Activated naive CD4-positive, alpha-beta T cell treated with anti-CD3 and anti-CD28 coated beads, Interleukin-2, amount 10 ng/mL, durations not matched to agents 7 days and 5 days (primary cell): ENCODE measurements at regions of chr12 and their contacts with region 1.

Region 1: DNA sequence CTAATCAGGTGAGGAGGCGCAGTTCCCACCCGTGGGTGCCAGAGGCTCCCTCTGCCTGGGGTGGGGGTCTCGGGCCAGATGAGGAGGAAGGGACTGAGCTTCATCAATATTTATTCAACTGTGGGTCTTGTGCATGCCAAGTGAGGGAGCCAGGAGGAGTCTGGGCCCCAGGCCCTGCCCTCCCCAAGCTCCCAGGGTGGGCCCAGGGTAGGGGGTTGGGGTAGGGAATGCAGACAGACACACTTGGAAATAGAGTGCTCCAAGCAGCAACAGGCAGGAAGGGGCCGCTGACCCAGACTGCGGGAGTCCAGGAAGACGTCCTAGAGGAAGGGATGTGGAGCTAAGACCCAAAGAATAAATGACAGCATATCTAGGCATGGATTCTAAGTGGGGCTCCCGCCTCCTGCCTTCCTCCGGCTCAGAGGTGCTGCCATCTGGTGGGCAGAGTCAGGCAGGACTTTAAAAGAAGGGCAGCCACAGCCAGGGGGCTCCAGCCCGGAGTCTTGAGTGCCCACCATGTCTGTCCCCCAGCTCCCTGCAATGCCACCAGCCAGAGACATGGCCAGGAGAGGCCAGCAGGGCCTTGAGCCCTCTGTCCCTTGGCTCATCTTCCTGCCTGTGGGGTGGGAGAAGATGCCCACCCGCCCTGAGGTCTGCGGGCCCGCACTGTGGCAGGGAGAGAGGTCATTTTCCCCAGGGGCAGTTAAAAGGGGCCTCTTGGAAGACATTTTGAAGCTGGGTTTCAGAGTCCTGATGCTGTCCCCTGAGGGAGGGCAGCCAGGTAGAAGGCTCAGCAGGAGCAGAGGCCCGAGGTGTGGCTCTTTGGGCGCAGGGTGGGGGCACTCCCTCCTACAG is 70.1 kb downstream of the PHETA1 start:
- DNase-seq: peak; percentile 58
- H3K4me3 Mint-ChIP-seq: no peak overlapping the region
- H3K27ac Mint-ChIP-seq: no peak overlapping the region
- H3K4me1 Mint-ChIP-seq: no peaks in the 10 kb centered on the region
- H3K27me3 Mint-ChIP-seq: no peaks in the 10 kb centered on the region

Region 2: DNA sequence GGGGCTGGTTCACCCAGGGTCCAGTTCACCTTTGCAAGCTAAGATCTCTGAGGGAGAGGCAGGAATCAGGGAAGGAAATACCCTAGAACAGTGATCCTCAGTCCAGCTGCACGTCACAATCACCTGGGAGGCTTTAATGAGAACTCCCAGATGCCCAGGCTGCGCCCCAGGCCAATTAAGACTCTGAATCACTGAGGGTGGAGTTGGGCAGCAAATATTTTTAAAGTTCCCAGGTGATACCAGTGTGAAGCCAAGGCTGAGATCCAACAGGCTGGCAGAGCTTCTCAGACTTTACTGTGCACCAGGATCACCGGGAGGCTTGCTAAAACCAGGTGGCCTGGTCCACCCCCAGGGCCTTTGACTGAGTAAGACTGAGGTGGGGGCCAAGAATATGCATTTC is 402.2 kb before region 1 on chr12:
- CTCF ChIA-PET with region 1: interaction called, 11 read pairs
- DNase-seq: no peak
- H3K4me3 Mint-ChIP-seq: no peak overlapping the region
- H3K27ac Mint-ChIP-seq: no peak overlapping the region
- H3K4me1 Mint-ChIP-seq: peaks cover 3% of the 10 kb centered on the region
- H3K27me3 Mint-ChIP-seq: peaks cover 37% of the 10 kb centered on the region

Region 3: GRCh38 chr12:111024205-111024801 is 274.5 kb before region 1 on chr12:
- CTCF ChIA-PET with region 1: interaction called, 11 read pairs
- DNase-seq: peak; percentile 66
- H3K4me3 Mint-ChIP-seq: no peak overlapping the region
- H3K27ac Mint-ChIP-seq: no peak overlapping the region
- H3K4me1 Mint-ChIP-seq: no peaks in the 10 kb centered on the region
- H3K27me3 Mint-ChIP-seq: peaks cover 82% of the 10 kb centered on the region

Region 4: DNA sequence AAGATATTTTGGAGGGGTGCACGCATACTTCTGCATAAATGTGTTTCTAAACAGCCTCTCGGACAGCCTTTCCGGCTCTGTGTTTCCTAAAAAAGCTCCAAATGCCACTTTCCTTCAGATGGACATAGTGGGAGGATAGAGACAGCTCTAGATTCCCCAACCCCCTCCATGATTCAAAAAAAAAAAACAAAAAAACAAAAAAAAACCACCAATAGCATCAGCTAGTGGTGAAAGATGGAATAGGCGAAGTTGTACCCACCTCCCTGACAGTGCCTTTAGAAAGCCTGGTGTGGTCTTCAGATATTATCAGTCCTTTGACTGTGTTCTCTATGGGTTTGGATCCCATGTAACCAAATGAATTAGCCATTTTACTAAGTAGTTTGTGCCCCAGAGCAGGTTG is 24.0 kb before region 1 on chr12:
- CTCF ChIA-PET with region 1: interaction called, 21 read pairs
- DNase-seq: no peak
- H3K4me3 Mint-ChIP-seq: no peak overlapping the region
- H3K27ac Mint-ChIP-seq: no peak overlapping the region
- H3K4me1 Mint-ChIP-seq: peaks cover 10% of the 10 kb centered on the region
- H3K27me3 Mint-ChIP-seq: peaks cover 7% of the 10 kb centered on the region

Region 5: DNA sequence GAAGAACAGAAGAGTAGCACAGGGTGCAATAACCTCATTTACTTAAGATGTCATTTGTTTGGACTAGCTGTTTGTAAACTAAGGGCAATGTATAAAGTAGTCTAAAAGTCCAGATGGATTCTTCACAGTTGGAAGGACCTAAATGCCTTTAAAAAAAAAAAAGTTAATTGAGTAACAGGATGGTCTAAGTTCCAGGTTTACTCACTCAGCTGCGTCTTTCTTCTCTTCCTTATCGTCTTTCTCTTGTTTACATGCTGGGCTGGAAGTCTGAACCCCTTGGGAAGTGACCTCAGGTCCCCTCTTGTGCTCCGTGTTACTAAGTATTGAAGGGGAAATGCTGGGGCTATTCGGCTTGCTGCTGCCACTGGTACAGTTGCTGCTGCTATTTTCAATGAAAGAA is 189.5 kb after region 1 on chr12:
- CTCF ChIA-PET with region 1: no interaction called
- DNase-seq: no peak
- H3K4me3 Mint-ChIP-seq: no peak overlapping the region
- H3K27ac Mint-ChIP-seq: no peak overlapping the region
- H3K4me1 Mint-ChIP-seq: no peaks in the 10 kb centered on the region
- H3K27me3 Mint-ChIP-seq: no peaks in the 10 kb centered on the region